Sigmoid colon (tissue), 7 donors: ENCODE measurements at regions of chr11 and their contacts with region 1.

Region 1: DNA sequence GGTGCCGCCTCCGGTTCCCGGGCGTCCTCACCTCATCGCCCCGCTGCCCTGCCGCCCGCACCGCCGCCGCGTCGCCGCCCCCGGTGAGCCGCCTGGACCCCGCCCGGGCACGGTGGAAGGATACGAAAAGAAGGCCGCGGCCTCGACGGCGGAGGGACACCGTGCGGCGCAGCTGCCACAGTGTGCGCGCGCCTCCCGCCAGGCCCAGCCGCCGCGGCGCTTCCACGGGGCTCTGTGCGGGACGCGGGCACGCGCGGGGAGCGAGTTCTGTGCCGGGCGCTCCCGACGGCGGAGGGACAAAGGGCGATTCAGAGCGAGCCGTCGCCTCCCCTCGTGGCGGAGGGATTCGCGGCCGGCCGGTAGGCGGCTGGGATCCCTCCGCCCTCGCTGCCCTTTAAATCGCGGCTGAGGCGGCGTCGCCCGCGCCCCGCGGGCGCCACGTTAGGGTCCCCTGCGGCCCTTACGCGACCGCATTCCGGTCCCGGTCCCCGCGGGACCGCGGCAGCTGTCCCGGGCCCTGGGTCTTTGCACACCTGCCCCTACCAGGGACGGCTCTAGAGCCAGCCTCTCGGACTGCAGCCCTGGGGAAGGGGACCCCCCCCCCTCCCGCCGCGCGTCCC is 569 bp upstream of the KMT5B start:
- DNase-seq: peak; percentile 96
- H3K4me3 ChIP-seq: peak overlapping the region; percentile 64 to 94 (median 76)
- H3K27ac ChIP-seq: peak overlapping the region; percentile 97 to 99 (median 98)
- H3K4me1 ChIP-seq: peaks cover 0 to 44% (median 41%) of the 10 kb centered on the region in 4 donors
- H3K27me3 ChIP-seq: no peaks in the 10 kb centered on the region
- CTCF ChIP-seq: peak in 1 of 4 experiments; percentile 4
- EP300 ChIP-seq: no peak
- POLR2A ChIP-seq: peak; percentile 92 to 94

Region 2: GRCh38 chr11:68121067-68121899 is 92.4 kb before region 1 on chr11 and contains the start of gene CHKA:
- intact Hi-C with region 1: loop called (anchors 5 kb)
- DNase-seq: peak; percentile 97
- H3K4me3 ChIP-seq: peak within 1 kb of the TSS; percentile 49 to 87 (median 72)
- H3K27ac ChIP-seq: peak within 1 kb of the TSS; percentile 99 to 100 (median 99)
- H3K4me1 ChIP-seq: peaks cover 0 to 55% (median 46%) of the 10 kb centered on the region in 4 donors
- H3K27me3 ChIP-seq: no peaks in the 10 kb centered on the region
- CTCF ChIP-seq: no peak
- EP300 ChIP-seq: peak in 2 of 4 donors; percentile 38 to 43
- POLR2A ChIP-seq: peak; percentile 70 to 84
- total RNA-seq, gene CHKA: 16.4 to 39.1 (median 27.9) TPM

Region 3: DNA sequence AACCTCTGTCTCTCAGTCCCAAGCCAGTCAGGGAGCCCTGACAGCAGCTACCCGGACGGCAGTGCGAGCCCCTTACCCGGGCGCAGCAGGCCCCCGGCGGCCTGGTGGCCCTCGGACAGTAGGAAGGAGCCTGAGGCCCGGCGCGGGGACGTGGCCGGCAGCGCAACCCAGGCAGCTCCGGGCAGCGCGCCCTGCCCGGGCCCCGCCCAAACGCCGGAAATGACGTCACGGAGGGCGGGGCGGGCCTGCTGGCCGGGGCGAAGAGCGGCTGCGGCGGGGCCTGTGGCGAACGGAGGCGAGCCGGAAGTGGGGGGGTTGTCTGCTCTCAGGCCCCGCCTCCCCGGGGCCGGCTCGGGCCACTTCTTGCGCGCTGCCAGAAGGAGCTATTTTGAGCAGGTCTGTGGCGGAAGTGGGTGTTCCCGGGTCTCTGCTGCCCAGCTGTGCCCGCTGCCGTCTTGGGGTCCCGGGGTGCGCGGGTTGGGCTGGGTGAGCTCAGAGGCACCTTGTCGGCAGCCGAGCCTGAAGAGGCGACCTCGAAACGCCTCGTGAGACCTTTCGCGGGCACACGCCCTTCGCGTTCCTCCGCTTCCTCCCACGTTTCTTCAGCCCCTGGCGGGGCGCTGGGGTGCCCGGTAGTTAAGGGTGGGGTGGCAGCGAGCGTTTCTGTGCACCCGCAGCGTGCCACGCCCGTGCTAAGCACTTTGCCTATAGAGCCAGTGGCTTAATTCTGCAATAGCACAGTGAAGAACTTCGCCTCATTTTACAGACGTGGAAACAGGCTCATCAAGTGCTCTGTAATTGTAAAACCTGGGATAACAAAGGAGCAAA is 58.3 kb after region 1 on chr11 and contains the start of gene C11orf24:
- intact Hi-C with region 1: loop called (anchors 2 kb)
- DNase-seq: peak; percentile 98
- H3K4me3 ChIP-seq: peak within 1 kb of the TSS; percentile 63 to 83 (median 72)
- H3K27ac ChIP-seq: peak within 1 kb of the TSS; percentile 93 to 97 (median 94)
- H3K4me1 ChIP-seq: peaks cover 0 to 37% (median 32%) of the 10 kb centered on the region in 4 donors
- H3K27me3 ChIP-seq: no peaks in the 10 kb centered on the region
- CTCF ChIP-seq: peak in 2 of 4 experiments; percentile 13
- EP300 ChIP-seq: no peak
- POLR2A ChIP-seq: peak; percentile 47 to 59
- total RNA-seq, gene C11orf24: 13.7 to 25.4 (median 21.9) TPM